Upper lobe of right lung (tissue), 1 donor: ENCODE measurements at regions of chr1 and their contacts with region 1.

Region 1: GRCh38 chr1:24459551-24460266 is 42.9 kb upstream of the RCAN3 start:
- DNase-seq: no peak
- ATAC-seq: no peak
- H3K4me3 ChIP-seq: no peak overlapping the region
- H3K27ac ChIP-seq: no peak overlapping the region
- H3K4me1 ChIP-seq: no peaks in the 10 kb centered on the region
- H3K27me3 ChIP-seq: no peaks in the 10 kb centered on the region
- CTCF ChIP-seq: no peak

Region 2: DNA sequence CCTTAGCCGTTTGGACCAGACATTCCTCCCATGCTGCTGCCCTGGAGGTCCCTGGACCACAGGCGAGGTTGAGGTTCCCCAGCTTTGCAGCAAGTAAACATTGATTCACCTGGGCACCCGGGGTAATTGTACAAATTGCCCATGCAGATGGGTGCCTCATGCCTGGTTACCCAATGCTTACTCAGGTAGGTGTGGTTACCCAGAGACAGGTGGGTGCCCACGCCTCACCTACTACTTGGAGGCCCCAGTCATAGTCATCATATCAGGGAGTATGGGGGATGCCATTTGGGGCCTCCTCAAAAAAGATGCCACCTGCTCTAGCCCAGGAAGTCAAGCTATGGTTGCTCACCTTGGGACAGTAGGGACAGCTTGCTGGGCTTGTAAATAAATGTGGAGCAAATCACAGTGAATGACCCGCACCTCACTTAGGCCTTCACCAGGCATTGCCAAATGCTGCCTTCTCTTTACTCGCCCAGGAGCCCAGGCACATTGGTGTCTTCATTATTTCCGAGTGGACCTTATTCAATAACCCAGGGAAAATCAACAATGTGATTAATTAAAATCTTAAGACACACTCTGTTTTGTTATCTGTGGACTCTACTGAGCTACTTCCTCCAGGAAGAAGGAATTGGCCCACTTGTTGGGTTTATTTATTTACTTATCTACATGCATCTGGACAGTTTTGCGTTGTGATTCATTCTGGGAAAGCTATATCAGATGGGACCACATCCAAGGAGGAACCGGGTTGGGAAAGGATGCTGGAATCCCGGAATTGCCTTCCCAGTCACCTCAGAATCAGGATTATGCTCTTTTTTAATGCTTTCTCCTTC is 176.2 kb before region 1 on chr1:
- intact Hi-C with region 1: no loop called
- DNase-seq: no peak
- ATAC-seq: peak; percentile 38
- H3K4me3 ChIP-seq: no peak overlapping the region
- H3K27ac ChIP-seq: no peak overlapping the region
- H3K4me1 ChIP-seq: no peaks in the 10 kb centered on the region
- H3K27me3 ChIP-seq: peaks cover 6% of the 10 kb centered on the region
- CTCF ChIP-seq: no peak

Region 3: DNA sequence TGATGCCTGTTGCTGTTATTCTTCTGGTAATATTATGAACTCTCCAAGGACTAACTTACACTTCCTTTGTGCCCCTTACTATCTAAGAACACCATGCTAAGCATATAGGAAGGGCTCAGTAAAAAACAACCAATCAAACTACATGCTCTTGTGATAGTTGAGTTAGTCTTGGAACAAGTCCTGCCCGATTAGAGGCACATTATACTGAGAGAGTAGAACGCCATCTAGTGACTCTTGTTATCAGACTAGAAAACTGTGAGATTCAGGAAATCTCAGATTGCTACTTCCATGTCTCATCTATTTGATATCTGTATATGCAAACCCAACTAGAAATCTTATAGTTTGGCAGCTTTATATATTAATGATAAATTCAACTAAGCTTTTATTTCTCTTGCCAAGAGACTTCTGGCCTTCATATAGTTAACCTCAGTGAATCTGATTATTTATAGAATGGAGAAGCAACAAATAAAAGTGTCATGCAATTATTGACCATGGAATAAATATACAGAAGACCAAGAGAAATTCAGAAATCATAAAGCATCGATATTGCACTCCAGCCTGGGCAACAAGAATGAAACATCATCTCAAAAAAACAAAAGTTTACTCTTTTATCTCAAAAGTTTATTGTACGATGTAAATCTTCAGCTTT is 175.6 kb after region 1 on chr1:
- intact Hi-C with region 1: loop called (anchors 2 kb)
- DNase-seq: no peak
- ATAC-seq: peak; percentile 88
- H3K4me3 ChIP-seq: no peak overlapping the region
- H3K27ac ChIP-seq: no peak overlapping the region
- H3K4me1 ChIP-seq: no peaks in the 10 kb centered on the region
- H3K27me3 ChIP-seq: no peaks in the 10 kb centered on the region
- CTCF ChIP-seq: peak; percentile 58